Tibial artery (tissue), 4 donors: ENCODE measurements at regions of chr1 and their contacts with region 1.

Region 1: GRCh38 chr1:87953732-87954344 is 625.2 kb downstream of the LMO4 start:
- DNase-seq: peak; percentile 65 to 80
- H3K4me3 ChIP-seq: no peak overlapping the region
- H3K27ac ChIP-seq: peak overlapping the region; percentile 20 to 69
- H3K4me1 ChIP-seq: peaks cover 0 to 81% (median 18%) of the 10 kb centered on the region in 4 donors
- H3K27me3 ChIP-seq: no peaks in the 10 kb centered on the region
- CTCF ChIP-seq: peak; percentile 67 to 74

Region 2: GRCh38 chr1:87497380-87498203 is 456.2 kb before region 1 on chr1:
- intact Hi-C with region 1: loop called (anchors 10 kb)
- DNase-seq: no peak
- H3K4me3 ChIP-seq: no peak overlapping the region
- H3K27ac ChIP-seq: peak overlapping the region; percentile 67 to 75
- H3K4me1 ChIP-seq: peaks cover 0 to 26% (median 4%) of the 10 kb centered on the region in 4 donors
- H3K27me3 ChIP-seq: no peaks in the 10 kb centered on the region
- CTCF ChIP-seq: no peak